ENCODE measurements at regions of chr1 and their contacts with region 1.

Region 1: GRCh38 chr1:11147197-11147770 is 41.9 kb upstream of the ANGPTL7 start:
- DNase-seq: peak; percentile 62
- H3K4me3 ChIP-seq: no peak overlapping the region
- H3K27ac ChIP-seq: peak overlapping the region; percentile 25 to 85; a peak in 3 of 4 replicates
- H3K4me1 ChIP-seq: peaks cover 4 to 29% of the 10 kb centered on the region in 2 experiments; a peak in 2 of 4 replicates
- H3K27me3 ChIP-seq: no peaks in the 10 kb centered on the region
- CTCF ChIP-seq: no peak
- EP300 ChIP-seq: peak in 1 of 2 experiments; percentile 63; a peak in 2 of 4 replicates
- RAD21 ChIP-seq: no peak

Region 2: DNA sequence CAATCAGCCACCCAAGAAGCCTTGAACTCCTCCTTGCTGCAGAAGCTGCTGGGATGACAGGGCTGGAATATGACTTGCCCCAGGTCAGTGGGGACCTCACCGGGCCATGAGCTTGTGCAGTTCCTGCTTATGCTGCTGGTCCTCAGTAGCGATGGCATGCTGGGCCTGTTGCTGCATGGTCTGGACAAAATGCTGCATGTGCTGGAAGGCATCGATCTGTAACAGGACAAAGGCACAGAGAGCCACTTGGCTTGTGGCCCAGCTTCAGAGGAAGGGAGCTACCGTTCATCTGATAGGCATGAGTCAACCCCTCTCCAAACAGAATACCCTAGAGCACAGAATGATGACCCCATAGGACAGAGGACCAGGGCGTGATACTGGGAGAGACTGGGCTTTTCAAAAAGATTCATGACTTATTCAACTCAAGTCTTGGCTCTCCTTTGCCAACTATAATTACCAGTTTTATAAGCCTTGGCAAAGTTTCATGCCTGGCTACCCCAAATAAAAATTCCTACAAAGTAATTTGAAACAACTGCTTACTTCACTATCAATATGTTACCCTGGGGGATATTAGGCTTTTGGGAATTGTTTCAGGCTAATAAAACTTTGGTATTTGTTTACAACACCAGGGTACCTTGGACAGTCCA is 12.9 kb before region 1 on chr1:
- CTCF ChIA-PET with region 1: interaction called, 14 read pairs
- POLR2A ChIA-PET with region 1: interaction called, 3 read pairs
- DNase-seq: peak; percentile 78
- H3K4me3 ChIP-seq: no peak overlapping the region
- H3K27ac ChIP-seq: peak overlapping the region; percentile 4 to 88; a peak in 2 of 4 replicates
- H3K4me1 ChIP-seq: peaks cover 18 to 36% of the 10 kb centered on the region in 2 experiments
- H3K27me3 ChIP-seq: no peaks in the 10 kb centered on the region
- CTCF ChIP-seq: no peak
- EP300 ChIP-seq: peak in 1 of 2 experiments; percentile 72; a peak in 3 of 4 replicates
- RAD21 ChIP-seq: no peak; the same call in 1 of the 2 replicates

Measured in SK-N-SH (cell line).